Activated CD4-positive, alpha-beta T cell treated with anti-CD3 and anti-CD28 coated beads, Interleukin-2, amount 10 ng/mL, durations not matched to agents 24 days and 14 days (primary cell): ENCODE measurements at regions of chr5 and their contacts with region 1.

Region 1: DNA sequence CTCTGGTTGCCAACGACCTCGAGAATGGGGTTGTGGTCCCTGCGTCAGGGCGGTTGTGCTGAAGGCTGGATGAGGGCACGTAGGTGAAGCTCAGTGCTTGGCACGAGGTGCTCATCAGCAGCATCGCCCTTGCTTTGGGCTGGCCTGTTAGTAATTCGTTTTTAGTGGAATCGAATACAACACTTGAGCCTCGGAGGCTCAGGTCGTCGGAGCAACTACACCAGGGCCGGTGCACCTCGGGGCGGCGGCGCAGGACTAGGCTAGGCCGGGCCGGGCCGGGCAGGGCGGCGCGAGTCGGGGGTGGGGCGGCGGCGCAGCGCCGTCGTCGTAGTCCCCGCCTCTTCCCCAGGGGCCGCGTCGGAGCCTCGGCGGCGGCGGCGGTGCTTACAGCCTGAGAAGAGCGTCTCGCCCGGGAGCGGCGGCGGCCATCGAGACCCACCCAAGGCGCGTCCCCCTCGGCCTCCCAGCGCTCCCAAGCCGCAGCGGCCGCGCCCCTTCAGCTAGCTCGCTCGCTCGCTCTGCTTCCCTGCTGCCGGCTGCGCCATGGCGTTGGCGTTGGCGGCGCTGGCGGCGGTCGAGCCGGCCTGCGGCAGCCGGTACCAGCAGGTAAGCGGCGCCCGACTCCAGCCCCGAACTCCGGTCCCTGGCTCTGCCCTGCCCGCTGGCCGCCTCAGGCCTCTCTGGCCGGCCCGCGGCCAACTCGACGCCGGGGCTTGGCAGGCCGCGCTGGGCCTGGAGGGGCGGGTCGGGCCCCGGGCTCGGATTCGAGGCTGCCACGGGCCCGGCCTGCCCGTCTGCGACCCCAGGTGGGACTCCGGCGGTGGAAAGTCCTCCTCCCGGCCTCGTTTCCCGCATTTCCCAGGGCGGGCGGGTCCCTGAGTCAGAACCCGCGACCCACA is at the start of gene NDFIP1:
- DNase-seq: peak; percentile 96
- H3K4me3 Mint-ChIP-seq: peak within 1 kb of the TSS; percentile 93
- H3K27ac Mint-ChIP-seq: peak within 1 kb of the TSS; percentile 97
- H3K4me1 Mint-ChIP-seq: peaks cover 55% of the 10 kb centered on the region
- H3K27me3 Mint-ChIP-seq: no peaks in the 10 kb centered on the region
- total RNA-seq, gene NDFIP1: 114 and 122 TPM in 2 replicates

Region 2: DNA sequence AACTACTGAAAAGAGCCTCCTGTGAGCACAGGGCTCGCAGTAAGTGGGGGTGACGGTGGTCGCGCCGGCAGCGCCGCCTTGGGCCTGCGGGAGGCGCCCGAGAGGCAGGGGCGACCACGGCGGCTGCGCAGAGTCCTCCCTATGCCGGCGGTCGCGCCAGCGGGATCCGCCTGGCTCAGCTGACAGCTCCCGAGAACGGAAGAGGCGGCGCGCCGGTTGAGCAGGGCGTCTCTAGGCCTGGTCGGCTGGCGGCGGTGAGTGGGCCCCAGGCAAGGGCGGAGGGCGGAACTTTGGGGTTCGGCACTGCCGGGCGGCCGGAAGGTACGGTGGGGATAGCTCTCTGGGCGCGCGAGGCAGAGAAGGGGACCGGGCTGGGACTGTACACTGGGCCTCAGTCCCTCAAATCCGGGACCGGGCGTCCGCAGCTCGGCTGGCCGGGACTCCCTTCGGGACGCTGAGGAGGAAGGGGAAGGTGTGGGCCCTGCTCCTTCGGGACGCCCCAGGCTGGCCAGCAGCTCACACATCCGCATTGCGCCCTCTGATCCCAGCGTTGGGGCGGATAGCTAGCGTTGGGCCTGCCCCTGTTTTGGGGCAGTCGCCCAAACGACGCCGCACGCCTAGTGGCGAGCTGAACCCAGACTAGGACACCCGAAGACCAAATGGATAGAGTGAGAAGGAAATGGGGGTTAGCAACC is 139.6 kb before region 1 on chr5 and contains the start of gene RNF14:
- intact Hi-C with region 1: loop called (anchors 1 kb)
- DNase-seq: peak; percentile 99
- H3K4me3 Mint-ChIP-seq: peak within 1 kb of the TSS; percentile 89
- H3K27ac Mint-ChIP-seq: peak within 1 kb of the TSS; percentile 98
- H3K4me1 Mint-ChIP-seq: peaks cover 34% of the 10 kb centered on the region
- H3K27me3 Mint-ChIP-seq: no peaks in the 10 kb centered on the region
- total RNA-seq, gene RNF14: 28.8 and 32.2 TPM in 2 replicates

Region 3: DNA sequence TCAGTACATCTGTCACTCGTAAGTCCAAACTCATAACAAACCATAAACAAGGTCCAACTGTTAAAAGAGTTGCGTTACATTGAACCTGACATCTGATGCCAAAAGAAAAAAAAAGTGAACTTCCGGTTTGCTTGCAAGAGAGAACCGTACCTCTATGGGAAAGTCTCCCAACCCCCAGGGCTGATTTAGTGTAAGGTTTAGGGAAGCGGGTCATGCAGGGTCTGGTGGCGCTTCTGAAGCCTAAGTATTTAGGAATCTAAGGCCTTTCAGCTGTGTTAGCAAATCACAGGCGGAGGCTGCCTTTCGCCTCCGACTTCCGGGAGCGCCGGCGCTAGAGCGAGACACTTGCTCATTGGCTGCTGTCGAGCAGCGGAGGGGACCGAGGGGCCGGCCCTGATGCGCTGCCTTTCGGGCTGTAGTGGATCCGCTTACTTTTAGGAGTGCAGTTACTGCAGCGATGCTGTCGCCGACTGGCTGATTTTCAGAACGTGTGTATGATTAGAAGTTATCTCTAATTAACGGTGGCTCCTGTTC is 83.8 kb before region 1 on chr5:
- intact Hi-C with region 1: loop called (anchors 1 kb)
- DNase-seq: peak; percentile 96
- H3K4me3 Mint-ChIP-seq: peak overlapping the region; percentile 90
- H3K27ac Mint-ChIP-seq: peak overlapping the region; percentile 98
- H3K4me1 Mint-ChIP-seq: peaks cover 14% of the 10 kb centered on the region
- H3K27me3 Mint-ChIP-seq: no peaks in the 10 kb centered on the region

Region 4: DNA sequence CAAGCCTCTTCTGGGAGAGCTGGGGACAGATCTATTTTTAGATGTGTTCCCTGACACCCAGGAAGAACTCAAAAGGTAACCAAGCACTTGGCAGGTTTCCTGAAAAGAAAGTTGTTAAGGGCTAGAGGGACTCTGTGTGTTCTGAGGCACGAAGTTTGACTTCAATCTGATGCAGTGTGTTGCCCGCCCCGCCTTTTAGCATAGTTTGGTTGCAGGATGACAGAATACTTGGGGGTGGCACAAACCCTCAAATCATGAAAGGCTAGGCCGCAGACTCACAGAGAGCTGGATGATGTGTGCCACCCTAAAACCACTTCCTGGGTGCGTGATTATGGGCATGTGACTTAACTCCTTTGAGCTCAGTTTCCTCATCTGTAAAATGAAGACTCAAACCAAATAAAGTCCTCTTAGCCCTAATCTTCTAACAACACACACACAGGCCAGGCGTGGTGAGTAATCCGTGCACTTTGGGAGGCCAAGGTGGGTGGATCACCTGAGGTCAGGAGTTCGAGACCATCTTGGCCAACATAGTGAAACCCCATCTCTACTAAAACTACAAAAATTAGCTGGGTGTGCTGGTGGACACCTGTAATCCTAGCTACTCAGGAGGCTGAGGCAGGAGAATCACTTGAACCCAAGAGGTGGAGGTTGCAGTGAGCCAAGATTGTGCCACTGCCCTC is 12.9 kb before region 1 on chr5:
- intact Hi-C with region 1: loop called (anchors 1 kb)
- DNase-seq: peak; percentile 89
- H3K4me3 Mint-ChIP-seq: peak overlapping the region; percentile 53
- H3K27ac Mint-ChIP-seq: peak overlapping the region; percentile 93
- H3K4me1 Mint-ChIP-seq: peaks cover 46% of the 10 kb centered on the region
- H3K27me3 Mint-ChIP-seq: no peaks in the 10 kb centered on the region

Region 5: GRCh38 chr5:142128675-142129208 is 20.1 kb after region 1 on chr5:
- intact Hi-C with region 1: loop called (anchors 2 kb)
- DNase-seq: no peak
- H3K4me3 Mint-ChIP-seq: peak overlapping the region; percentile 64
- H3K27ac Mint-ChIP-seq: peak overlapping the region; percentile 54
- H3K4me1 Mint-ChIP-seq: peaks cover 35% of the 10 kb centered on the region
- H3K27me3 Mint-ChIP-seq: no peaks in the 10 kb centered on the region

Region 6: DNA sequence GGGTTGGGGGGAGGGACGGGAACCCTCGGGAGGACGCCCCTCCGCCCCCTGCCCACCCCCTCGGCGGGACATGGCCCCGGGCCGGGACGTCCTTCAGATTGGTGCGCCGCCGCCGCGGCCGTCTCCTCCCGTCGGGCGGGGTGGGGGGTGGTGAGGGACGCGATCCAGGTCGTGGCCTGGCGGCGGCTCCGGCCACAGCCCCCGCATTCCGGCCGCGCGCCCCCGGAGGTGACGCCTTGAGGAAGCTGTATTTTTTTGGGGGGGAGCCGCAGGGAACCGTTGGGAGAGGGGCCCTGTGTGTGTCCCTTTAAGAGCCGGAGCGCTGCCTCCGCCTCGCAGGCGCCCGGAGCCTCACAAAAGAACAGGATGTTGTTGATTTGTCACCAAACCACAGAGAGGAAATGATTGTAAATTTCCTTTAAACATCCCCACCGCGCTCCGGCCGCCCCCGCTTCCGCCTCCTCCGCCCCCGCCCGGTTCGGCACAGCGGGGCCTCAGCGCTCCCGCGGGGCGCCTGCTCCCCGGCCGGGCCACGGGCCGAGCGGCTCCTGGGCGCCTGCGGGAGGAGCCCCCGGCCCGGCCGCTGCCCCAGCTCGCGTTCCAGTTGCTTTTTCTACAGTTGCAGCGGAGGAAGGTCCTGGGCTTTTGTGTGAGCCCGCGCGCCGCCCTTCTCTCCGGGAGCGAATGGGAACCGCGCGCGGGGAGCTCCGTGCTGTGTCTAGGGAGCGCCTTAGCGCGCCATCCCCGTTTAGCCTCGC is 248.2 kb after region 1 on chr5:
- intact Hi-C with region 1: loop called (anchors 2 kb)
- DNase-seq: peak; percentile 97
- H3K4me3 Mint-ChIP-seq: peak overlapping the region; percentile 79
- H3K27ac Mint-ChIP-seq: peak overlapping the region; percentile 94
- H3K4me1 Mint-ChIP-seq: peaks cover 40% of the 10 kb centered on the region
- H3K27me3 Mint-ChIP-seq: peaks cover 3% of the 10 kb centered on the region